K562 (cell line): ENCODE measurements at regions of chr4 and their contacts with region 1.

Region 1: DNA sequence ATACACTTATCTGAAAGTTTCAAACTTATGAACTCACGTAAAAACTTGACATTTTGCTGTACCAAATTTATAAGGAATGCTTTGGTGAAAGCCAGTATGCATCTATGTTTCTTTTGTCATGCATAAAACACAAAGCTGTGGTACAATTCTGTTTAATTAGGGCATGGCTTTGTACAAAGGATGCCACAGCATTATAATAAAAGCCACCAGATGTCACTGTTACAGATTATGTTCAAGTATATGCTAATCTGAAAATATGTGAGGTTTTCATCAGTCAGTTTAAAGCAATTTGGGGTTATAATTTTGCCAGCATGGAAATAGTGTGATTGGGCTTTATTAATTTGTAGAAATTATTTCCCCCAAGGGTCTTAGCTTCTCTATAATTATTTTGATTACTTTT is 69.0 kb downstream of the ATOH1 start:
- DNase-seq: peak in 2 of 4 experiments; percentile 6 to 9
- ATAC-seq: peak; percentile 77
- H3K4me3 ChIP-seq: no peak overlapping the region
- H3K27ac ChIP-seq: no peak overlapping the region
- H3K4me1 ChIP-seq: no peaks in the 10 kb centered on the region
- H3K27me3 ChIP-seq: no peaks in the 10 kb centered on the region
- CTCF ChIP-seq: peak; percentile 13 to 48 (median 27); a peak in 3 of 6 replicates
- EP300 ChIP-seq: no peak
- POLR2A ChIP-seq: no peak
- RAD21 ChIP-seq: peak; percentile 26 to 42; a peak in 3 of 4 replicates

Region 2: DNA sequence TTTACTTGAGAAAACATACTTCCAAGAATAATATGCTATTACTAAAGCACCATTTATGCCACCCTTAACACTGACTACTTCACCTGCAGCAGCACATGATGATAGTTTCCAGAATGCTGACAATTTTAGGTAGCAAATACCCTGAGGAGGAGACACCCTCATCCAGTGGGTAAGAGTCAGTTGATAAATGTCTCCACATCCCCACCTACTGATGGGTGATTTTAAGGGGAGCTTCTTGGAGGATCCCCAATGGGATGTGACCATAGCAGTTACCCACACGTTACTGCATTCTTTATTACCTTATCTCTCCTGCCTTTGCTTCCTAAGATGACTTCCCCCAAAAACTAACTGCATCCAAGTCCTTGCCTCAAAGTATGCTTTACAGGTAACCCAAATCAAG is 178.9 kb after region 1 on chr4:
- CTCF ChIA-PET with region 1: no interaction called
- POLR2A ChIA-PET with region 1: no interaction called
- in situ Hi-C with region 1: no loop called
- intact Hi-C with region 1: loop called (anchors 1 kb)
- DNase-seq: peak in 2 of 4 experiments; percentile 30 to 39
- ATAC-seq: peak; percentile 83
- H3K4me3 ChIP-seq: peak overlapping the region; percentile 19
- H3K27ac ChIP-seq: peak overlapping the region; percentile 13
- H3K4me1 ChIP-seq: no peaks in the 10 kb centered on the region
- H3K27me3 ChIP-seq: no peaks in the 10 kb centered on the region
- CTCF ChIP-seq: peak in 2 of 3 experiments; percentile 32 to 45; a peak in 3 of 6 replicates
- EP300 ChIP-seq: no peak
- POLR2A ChIP-seq: no peak
- RAD21 ChIP-seq: peak in 1 of 2 experiments; percentile 39; a peak in 2 of 4 replicates

Region 3: DNA sequence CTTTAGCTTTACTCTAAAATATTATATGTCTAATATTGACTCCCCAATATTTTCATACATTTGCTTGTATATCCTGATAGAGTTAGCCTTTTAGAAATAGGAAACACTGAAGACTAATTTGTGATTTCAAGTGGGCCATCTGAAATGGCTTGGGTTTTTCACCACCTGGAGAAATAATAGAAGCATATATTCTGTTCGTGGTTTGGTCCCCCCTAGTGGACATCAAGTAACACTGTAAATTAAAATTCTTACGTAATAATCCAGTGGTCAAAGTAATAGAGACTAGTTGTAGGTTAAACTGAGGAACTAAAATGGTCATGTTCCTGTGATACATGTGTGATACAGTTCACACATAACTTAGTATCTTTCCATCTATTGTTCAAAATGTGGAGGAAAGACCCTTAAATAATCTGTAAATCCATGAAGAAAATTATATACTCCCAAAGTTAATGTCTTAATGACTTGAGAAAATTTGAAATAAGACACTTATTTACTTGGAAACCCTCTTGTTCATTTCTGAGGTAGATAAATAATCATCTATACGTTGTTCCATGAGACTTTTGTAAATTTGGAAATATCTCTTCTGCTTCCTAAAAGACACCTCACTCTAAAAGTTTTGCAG is 230.3 kb after region 1 on chr4:
- CTCF ChIA-PET with region 1: no interaction called
- POLR2A ChIA-PET with region 1: no interaction called
- in situ Hi-C with region 1: no loop called
- intact Hi-C with region 1: loop called (anchors 2 kb)
- DNase-seq: peak; percentile 29 to 46 (median 42)
- ATAC-seq: peak; percentile 85
- H3K4me3 ChIP-seq: no peak overlapping the region
- H3K27ac ChIP-seq: no peak overlapping the region
- H3K4me1 ChIP-seq: no peaks in the 10 kb centered on the region
- H3K27me3 ChIP-seq: no peaks in the 10 kb centered on the region
- CTCF ChIP-seq: peak; percentile 47 to 59 (median 48); a peak in 4 of 6 replicates
- EP300 ChIP-seq: no peak
- POLR2A ChIP-seq: no peak
- RAD21 ChIP-seq: peak; percentile 34 to 49

Region 4: GRCh38 chr4:94256828-94257227 is 359.3 kb after region 1 on chr4:
- CTCF ChIA-PET with region 1: no interaction called
- POLR2A ChIA-PET with region 1: no interaction called
- in situ Hi-C with region 1: no loop called
- intact Hi-C with region 1: loop called (anchors 5 kb)
- DNase-seq: peak in 1 of 4 experiments; percentile 5
- ATAC-seq: peak; percentile 58; the same call in 1 of the 3 replicates
- H3K4me3 ChIP-seq: no peak overlapping the region
- H3K27ac ChIP-seq: no peak overlapping the region
- H3K4me1 ChIP-seq: no peaks in the 10 kb centered on the region
- H3K27me3 ChIP-seq: no peaks in the 10 kb centered on the region
- CTCF ChIP-seq: peak in 1 of 3 experiments; percentile 48; a peak in 2 of 6 replicates
- EP300 ChIP-seq: no peak
- POLR2A ChIP-seq: no peak
- RAD21 ChIP-seq: peak in 1 of 2 experiments; percentile 9; a peak in 1 of 4 replicates